Activated CD8-positive, alpha-beta T cell treated with anti-CD3 and anti-CD28 coated beads, Interleukin-2, amount 10 ng/mL, durations not matched to agents 7 days and 5 days (primary cell): ENCODE measurements at regions of chr12 and their contacts with region 1.

Region 1: GRCh38 chr12:77010691-77011548 is 54.4 kb downstream of the E2F7 start:
- DNase-seq: peak; percentile 81
- ATAC-seq: peak; percentile 86
- H3K4me3 Mint-ChIP-seq: no peak overlapping the region
- H3K27ac Mint-ChIP-seq: no peak overlapping the region
- H3K4me1 Mint-ChIP-seq: no peaks in the 10 kb centered on the region
- H3K27me3 Mint-ChIP-seq: peaks cover 18% of the 10 kb centered on the region

Region 2: DNA sequence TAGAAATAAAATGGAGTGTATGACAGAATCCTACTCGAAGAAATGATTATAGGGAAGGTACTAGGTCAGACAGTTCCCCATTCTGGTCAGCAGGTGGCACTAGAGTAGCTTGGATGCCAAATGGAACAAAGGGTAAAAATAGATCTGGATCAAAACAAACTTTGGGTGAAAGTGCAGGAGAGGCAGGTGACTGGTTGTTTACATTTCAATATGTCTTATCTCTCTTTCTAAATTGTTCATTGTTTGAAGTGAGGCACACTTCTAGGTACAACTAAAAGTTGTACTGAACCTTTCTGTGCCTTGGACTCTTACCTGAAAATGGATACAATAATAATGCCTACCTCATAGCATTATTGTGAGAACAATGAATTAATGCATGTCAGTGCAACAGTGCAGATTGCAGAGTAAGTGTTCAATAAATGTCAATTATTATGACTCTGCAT is 389.3 kb before region 1 on chr12:
- CTCF ChIA-PET with region 1: interaction called, 54 read pairs
- POLR2A ChIA-PET with region 1: no interaction called
- DNase-seq: peak; percentile 74
- ATAC-seq: peak; percentile 64
- H3K4me3 Mint-ChIP-seq: no peak overlapping the region
- H3K27ac Mint-ChIP-seq: no peak overlapping the region
- H3K4me1 Mint-ChIP-seq: peaks cover 2% of the 10 kb centered on the region
- H3K27me3 Mint-ChIP-seq: no peaks in the 10 kb centered on the region

Region 3: GRCh38 chr12:76952995-76953394 is 57.9 kb before region 1 on chr12:
- CTCF ChIA-PET with region 1: interaction called, 11 read pairs
- POLR2A ChIA-PET with region 1: no interaction called
- DNase-seq: no peak
- ATAC-seq: no peak
- H3K4me3 Mint-ChIP-seq: no peak overlapping the region
- H3K27ac Mint-ChIP-seq: no peak overlapping the region
- H3K4me1 Mint-ChIP-seq: no peaks in the 10 kb centered on the region
- H3K27me3 Mint-ChIP-seq: peaks cover 2% of the 10 kb centered on the region

Region 4: DNA sequence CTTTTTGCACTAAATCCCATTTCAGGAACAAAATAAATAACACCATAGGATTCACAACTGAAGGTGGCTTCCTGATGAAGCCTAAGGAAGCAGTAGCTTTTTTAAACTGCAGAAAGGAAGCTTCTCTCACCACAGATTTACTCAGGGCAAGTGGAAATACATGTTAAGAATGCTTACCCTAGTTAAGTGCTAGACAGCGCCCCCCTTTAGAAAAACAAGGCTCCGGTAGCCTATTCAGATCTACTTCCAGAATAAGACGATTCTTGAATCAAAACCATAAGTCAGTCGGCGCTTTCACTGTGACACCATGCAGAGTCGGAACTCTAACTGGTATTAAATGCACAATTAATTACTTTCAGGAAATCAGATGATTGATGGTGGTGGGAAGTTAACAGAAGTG is 12.6 kb after region 1 on chr12:
- CTCF ChIA-PET with region 1: interaction called, 50 read pairs
- POLR2A ChIA-PET with region 1: no interaction called
- DNase-seq: no peak
- ATAC-seq: no peak
- H3K4me3 Mint-ChIP-seq: no peak overlapping the region
- H3K27ac Mint-ChIP-seq: no peak overlapping the region
- H3K4me1 Mint-ChIP-seq: no peaks in the 10 kb centered on the region
- H3K27me3 Mint-ChIP-seq: no peaks in the 10 kb centered on the region

Region 5: DNA sequence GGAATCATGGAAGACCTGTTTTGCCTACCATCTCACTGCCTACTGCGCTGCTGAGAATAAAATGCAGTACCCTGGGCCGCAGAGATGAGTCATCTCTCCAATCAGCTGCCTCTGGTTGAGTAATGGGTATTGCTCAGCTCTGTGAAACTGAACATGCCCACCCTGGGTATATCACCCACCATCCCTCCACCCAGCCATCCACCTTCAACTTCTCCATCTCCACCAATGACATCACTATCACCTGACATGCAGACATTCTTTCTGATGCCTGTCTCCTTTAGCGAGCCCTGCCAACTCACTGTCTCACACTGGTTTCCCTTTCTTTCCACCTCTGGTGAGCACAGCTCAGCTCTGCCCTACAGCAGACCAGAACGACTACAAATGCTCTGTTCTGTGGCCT is 20.8 kb after region 1 on chr12:
- CTCF ChIA-PET with region 1: interaction called, 11 read pairs
- POLR2A ChIA-PET with region 1: no interaction called
- DNase-seq: no peak
- ATAC-seq: no peak
- H3K4me3 Mint-ChIP-seq: no peak overlapping the region
- H3K27ac Mint-ChIP-seq: no peak overlapping the region
- H3K4me1 Mint-ChIP-seq: no peaks in the 10 kb centered on the region
- H3K27me3 Mint-ChIP-seq: no peaks in the 10 kb centered on the region

Region 6: GRCh38 chr12:77040231-77040630 is 29.3 kb after region 1 on chr12:
- CTCF ChIA-PET with region 1: interaction called, 11 read pairs
- POLR2A ChIA-PET with region 1: no interaction called
- DNase-seq: no peak
- ATAC-seq: no peak
- H3K4me3 Mint-ChIP-seq: no peak overlapping the region
- H3K27ac Mint-ChIP-seq: no peak overlapping the region
- H3K4me1 Mint-ChIP-seq: no peaks in the 10 kb centered on the region
- H3K27me3 Mint-ChIP-seq: no peaks in the 10 kb centered on the region

Region 7: DNA sequence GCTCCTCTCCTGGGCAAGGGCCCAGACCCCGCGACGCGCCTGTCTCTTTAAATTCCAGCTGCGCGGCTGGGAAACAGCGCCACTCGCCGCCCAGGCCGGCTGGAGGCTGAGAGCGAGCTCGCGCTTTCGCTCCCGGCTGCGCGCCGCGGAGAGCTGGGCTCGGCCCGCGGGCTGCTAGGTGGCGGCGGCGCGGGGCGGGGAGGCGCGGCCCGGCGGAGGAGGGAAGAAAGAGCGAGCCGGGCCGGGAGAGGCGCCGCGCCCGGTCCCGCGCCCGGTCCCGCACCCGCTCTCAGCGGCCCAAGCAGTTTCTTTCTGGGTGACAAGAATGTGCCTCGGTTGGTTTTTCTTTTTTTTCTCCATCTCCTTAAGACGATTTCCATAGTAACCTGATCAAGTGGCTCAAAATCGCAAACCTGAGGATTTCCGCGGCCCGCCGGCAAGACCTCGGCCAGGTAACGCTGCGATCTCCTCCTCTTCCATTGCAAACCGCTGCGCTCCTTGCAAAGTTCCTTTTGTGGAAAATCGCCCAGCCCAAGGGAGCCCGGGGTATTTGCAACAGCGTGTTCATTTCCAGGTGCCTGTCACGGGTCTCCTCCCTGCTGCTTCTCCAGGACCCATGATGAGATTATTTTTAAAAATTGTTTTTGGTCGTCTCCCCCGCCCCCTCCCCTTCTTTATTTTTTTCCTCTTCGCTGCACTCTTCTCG is 314.0 kb after region 1 on chr12:
- CTCF ChIA-PET with region 1: no interaction called
- POLR2A ChIA-PET with region 1: no interaction called
- DNase-seq: peak; percentile 40
- ATAC-seq: peak; percentile 96
- H3K4me3 Mint-ChIP-seq: peak overlapping the region; percentile 50
- H3K27ac Mint-ChIP-seq: no peak overlapping the region
- H3K4me1 Mint-ChIP-seq: peaks cover 6% of the 10 kb centered on the region
- H3K27me3 Mint-ChIP-seq: peaks cover 40% of the 10 kb centered on the region